Mammary epithelial cell (primary cell): ENCODE measurements at regions of chr5 and their contacts with region 1.

Region 1: GRCh38 chr5:87008751-87009560 is 258.7 kb upstream of the RASA1 start:
- DNase-seq: no peak
- H3K4me3 ChIP-seq: no peak overlapping the region
- H3K27ac ChIP-seq: no peak overlapping the region
- H3K4me1 ChIP-seq: no peaks in the 10 kb centered on the region
- H3K27me3 ChIP-seq: no peaks in the 10 kb centered on the region
- CTCF ChIP-seq: no peak

Region 2: GRCh38 chr5:86968301-86968753 is 40.6 kb before region 1 on chr5:
- CTCF ChIA-PET with region 1: no interaction called
- dilution Hi-C with region 1: no loop called
- in situ Hi-C with region 1: no loop called
- intact Hi-C with region 1: loop called (anchors 2 kb)
- DNase-seq: peak; percentile 21
- H3K4me3 ChIP-seq: no peak overlapping the region
- H3K27ac ChIP-seq: no peak overlapping the region
- H3K4me1 ChIP-seq: no peaks in the 10 kb centered on the region
- H3K27me3 ChIP-seq: no peaks in the 10 kb centered on the region
- CTCF ChIP-seq: peak; percentile 29 to 38